ENCODE measurements at regions of chr11 and their contacts with region 1.

Region 1: GRCh38 chr11:75532200-75533048 is 6.7 kb upstream of the GDPD5 start:
- DNase-seq: peak; percentile 71
- H3K4me3 ChIP-seq: no peak overlapping the region
- H3K27ac ChIP-seq: no peak overlapping the region
- H3K4me1 ChIP-seq: no peaks in the 10 kb centered on the region
- H3K27me3 ChIP-seq: no peaks in the 10 kb centered on the region
- CTCF ChIP-seq: peak; percentile 89
- EP300 ChIP-seq: no peak
- RAD21 ChIP-seq: peak; percentile 94

Region 2: GRCh38 chr11:75428281-75428724 is 104.1 kb before region 1 on chr11:
- CTCF ChIA-PET with region 1: interaction called, 35 read pairs
- POLR2A ChIA-PET with region 1: interaction called, 3 read pairs
- DNase-seq: peak; percentile 99
- H3K4me3 ChIP-seq: peak overlapping the region; percentile 54 to 55; a peak in 3 of 4 replicates
- H3K27ac ChIP-seq: peak overlapping the region in 1 of 2 experiments; percentile 53; a peak in 1 of 4 replicates
- H3K4me1 ChIP-seq: peaks cover 0 to 21% of the 10 kb centered on the region in 2 experiments; a peak in 1 of 4 replicates
- H3K27me3 ChIP-seq: peaks cover 9% of the 10 kb centered on the region
- CTCF ChIP-seq: no peak
- EP300 ChIP-seq: no peak
- RAD21 ChIP-seq: no peak

Region 3: GRCh38 chr11:75450826-75451821 is 81.3 kb before region 1 on chr11:
- CTCF ChIA-PET with region 1: interaction called, 275 read pairs
- POLR2A ChIA-PET with region 1: no interaction called
- DNase-seq: peak; percentile 68
- H3K4me3 ChIP-seq: no peak overlapping the region
- H3K27ac ChIP-seq: no peak overlapping the region
- H3K4me1 ChIP-seq: no peaks in the 10 kb centered on the region
- H3K27me3 ChIP-seq: no peaks in the 10 kb centered on the region
- CTCF ChIP-seq: peak; percentile 58
- EP300 ChIP-seq: no peak
- RAD21 ChIP-seq: no peak

Region 4: GRCh38 chr11:75499449-75500190 is 32.8 kb before region 1 on chr11:
- CTCF ChIA-PET with region 1: interaction called, 28 read pairs
- POLR2A ChIA-PET with region 1: no interaction called
- DNase-seq: no peak
- H3K4me3 ChIP-seq: no peak overlapping the region
- H3K27ac ChIP-seq: peak overlapping the region in 1 of 2 experiments; percentile 39; a peak in 2 of 4 replicates
- H3K4me1 ChIP-seq: peaks cover 0 to 12% of the 10 kb centered on the region in 2 experiments; a peak in 2 of 4 replicates
- H3K27me3 ChIP-seq: no peaks in the 10 kb centered on the region
- CTCF ChIP-seq: no peak
- EP300 ChIP-seq: no peak
- RAD21 ChIP-seq: no peak

Measured in SK-N-SH (cell line).